RWPE1 (cell line): ENCODE measurements at regions of chr17 and their contacts with region 1.

Region 1: GRCh38 chr17:32240750-32241149 is 24.9 kb upstream of the RHBDL3 start:
- DNase-seq: no peak
- H3K27ac ChIP-seq: no peak overlapping the region
- CTCF ChIP-seq: no peak

Region 2: DNA sequence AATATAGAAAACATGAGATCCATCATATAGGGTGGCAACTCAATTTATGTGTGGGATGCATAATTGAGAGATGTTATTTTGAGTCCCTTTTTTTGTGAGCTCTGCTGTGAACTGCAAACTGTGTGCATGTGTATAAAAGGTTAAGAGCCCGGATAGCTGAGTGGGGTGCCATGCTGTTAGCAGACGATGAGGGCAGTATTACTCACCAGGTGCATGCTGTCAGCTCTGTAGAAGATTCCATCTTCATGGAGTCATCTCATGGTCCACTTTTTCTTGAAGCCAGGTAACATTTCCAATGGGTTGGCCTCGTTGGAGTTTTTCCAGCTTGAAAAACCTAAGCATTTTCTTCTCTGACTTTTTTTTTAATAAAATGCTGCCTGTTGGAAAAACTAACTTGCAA is 18.1 kb before region 1 on chr17:
- CTCF ChIA-PET with region 1: no interaction called
- POLR2A ChIA-PET with region 1: no interaction called
- DNase-seq: peak; percentile 78
- H3K27ac ChIP-seq: no peak overlapping the region
- CTCF ChIP-seq: no peak

Region 3: GRCh38 chr17:32265192-32265923 is 24.6 kb after region 1 on chr17 and contains the start of gene RHBDL3:
- CTCF ChIA-PET with region 1: no interaction called
- POLR2A ChIA-PET with region 1: no interaction called
- DNase-seq: no peak
- H3K27ac ChIP-seq: no peak within 1 kb of the TSS
- CTCF ChIP-seq: no peak

Region 4: GRCh38 chr17:32350666-32351418 is 110.1 kb after region 1 on chr17:
- CTCF ChIA-PET with region 1: no interaction called
- POLR2A ChIA-PET with region 1: interaction called, 10 read pairs
- DNase-seq: no peak
- H3K27ac ChIP-seq: peak overlapping the region; percentile 90
- CTCF ChIP-seq: no peak